ENCODE measurements at regions of chr10 and their contacts with region 1.

Region 1: DNA sequence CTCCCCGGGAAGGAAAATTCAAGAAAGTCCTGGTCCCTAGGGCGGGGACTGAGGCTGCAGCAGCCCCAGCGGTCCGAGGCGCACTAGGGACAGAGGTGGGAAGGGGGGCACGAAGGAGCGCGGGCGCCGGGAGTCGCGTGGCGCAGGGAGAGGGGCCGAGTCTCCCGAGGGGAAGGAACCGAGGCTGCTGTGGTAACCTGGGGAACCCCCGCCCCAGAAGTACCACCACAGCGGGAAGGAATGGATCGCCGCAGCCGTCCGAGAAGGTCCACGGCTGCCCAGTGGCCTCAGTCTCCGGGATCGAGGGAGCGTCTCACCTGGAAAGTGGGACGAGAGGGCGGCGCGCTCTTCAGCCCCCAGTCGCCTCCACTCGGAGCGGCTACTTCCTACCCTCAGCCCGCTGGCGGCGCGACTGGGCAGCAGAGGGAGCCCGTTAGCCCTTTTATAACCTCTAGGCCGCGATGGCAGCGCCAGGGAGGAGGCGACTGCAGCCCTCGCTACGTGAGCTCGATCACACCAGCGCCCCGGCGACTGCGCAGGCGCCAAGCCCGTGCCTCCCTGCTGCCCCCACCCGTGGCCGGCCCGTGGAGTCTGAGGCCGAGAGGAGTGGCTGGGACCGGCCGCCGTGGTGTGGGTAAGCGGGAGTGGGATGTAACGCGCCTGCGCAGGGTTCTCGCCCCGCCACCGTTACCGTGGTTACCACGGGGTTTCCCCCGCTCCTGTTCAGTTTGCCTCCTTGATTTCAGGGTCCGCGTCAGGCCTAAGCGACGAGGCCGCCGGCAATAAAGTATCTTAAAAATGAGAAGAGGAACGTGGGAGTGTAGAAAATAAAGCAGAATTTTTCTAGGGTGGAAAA is at the start of gene P4HA1:
- DNase-seq: peak; percentile 88 to 99 (median 92)
- ATAC-seq: peak; percentile 95
- H3K4me3 ChIP-seq: peak within 1 kb of the TSS; percentile 60
- H3K4me3 Mint-ChIP-seq: peak within 1 kb of the TSS; percentile 91 to 97 (median 96)
- H3K27ac ChIP-seq: peak within 1 kb of the TSS; percentile 97
- H3K27ac Mint-ChIP-seq: peak within 1 kb of the TSS; percentile 76 to 98 (median 92)
- H3K4me1 ChIP-seq: peaks cover 0 to 12% of the 10 kb centered on the region in 2 donors
- H3K4me1 Mint-ChIP-seq: peaks cover 13 to 44% (median 38%) of the 10 kb centered on the region in 7 donors
- H3K27me3 ChIP-seq: no peaks in the 10 kb centered on the region
- H3K27me3 Mint-ChIP-seq: peaks cover 0 to 3% (median 0%) of the 10 kb centered on the region in 5 donors
- total RNA-seq, gene P4HA1: 10.5 to 74.7 (median 14.7) TPM

Region 2: DNA sequence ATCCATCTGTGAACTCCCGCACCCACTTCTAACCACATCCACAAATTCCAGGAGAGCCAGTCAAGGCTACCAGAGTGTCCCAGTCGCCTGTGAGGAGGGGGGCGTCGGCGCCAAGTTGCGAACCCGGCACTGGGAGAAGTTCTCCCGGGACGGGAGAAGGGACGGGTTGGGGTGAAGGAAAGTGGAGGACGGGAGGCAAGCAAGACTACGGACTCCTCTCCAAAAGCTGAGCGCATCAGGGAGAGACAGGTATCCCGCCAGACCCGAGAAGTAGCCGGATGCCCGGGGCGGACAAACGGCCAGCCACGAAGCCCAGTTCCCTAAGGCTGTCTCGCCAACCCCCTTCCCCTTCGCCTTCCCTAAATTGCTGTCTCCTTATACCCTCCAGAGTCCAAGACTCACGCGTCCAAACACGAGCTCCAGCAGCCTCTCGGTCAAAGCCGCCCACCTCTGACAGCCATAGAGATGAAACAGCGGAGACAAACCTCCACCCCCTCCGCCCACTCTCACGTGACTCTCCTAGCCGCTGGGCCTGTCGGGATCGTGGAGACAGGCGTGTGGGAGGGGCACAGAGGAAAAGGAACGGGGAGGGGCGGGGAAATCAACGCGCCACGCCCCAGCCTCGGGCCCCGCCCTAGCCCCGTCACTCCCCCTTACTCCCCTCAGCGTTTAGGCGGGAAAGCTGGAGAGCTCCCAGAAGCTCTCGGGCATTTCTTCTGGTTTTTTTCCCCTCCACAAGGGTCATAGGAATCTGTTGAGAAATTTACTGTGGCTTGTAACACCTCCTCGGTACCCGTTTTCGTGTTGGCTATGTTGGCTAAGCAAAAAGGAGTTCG is 470.9 kb before region 1 on chr10 and contains the start of gene MICU1:
- CTCF ChIA-PET with region 1: no interaction called
- POLR2A ChIA-PET with region 1: no interaction called
- intact Hi-C with region 1: loop called in 1 of 2 experiments (anchors 2 kb)
- DNase-seq: peak; percentile 74 to 93 (median 90)
- ATAC-seq: peak; percentile 100
- H3K4me3 ChIP-seq: peak within 1 kb of the TSS; percentile 97
- H3K4me3 Mint-ChIP-seq: peak within 1 kb of the TSS; percentile 97 to 100 (median 100)
- H3K27ac ChIP-seq: peak within 1 kb of the TSS; percentile 76
- H3K27ac Mint-ChIP-seq: peak within 1 kb of the TSS; percentile 83 to 99 (median 97)
- H3K4me1 ChIP-seq: peaks cover 11 to 16% of the 10 kb centered on the region in 2 donors
- H3K4me1 Mint-ChIP-seq: peaks cover 11 to 28% (median 16%) of the 10 kb centered on the region in 7 donors
- H3K27me3 ChIP-seq: no peaks in the 10 kb centered on the region
- H3K27me3 Mint-ChIP-seq: peaks cover 0 to 8% (median 0%) of the 10 kb centered on the region in 5 donors
- total RNA-seq, gene MICU1: 20.8 to 39.6 (median 26.3) TPM

Region 3: GRCh38 chr10:73110345-73110849 is 13.7 kb after region 1 on chr10 and contains the start of gene NUDT13:
- CTCF ChIA-PET with region 1: interaction called, 10 read pairs
- POLR2A ChIA-PET with region 1: interaction called, 33 read pairs
- intact Hi-C with region 1: loop called (anchors 1 kb)
- DNase-seq: peak in 8 of 9 donors; percentile 30 to 59 (median 47)
- ATAC-seq: peak; percentile 96
- H3K4me3 ChIP-seq: peak within 1 kb of the TSS; percentile 55
- H3K4me3 Mint-ChIP-seq: peak within 1 kb of the TSS; percentile 76 to 96 (median 94)
- H3K27ac ChIP-seq: peak within 1 kb of the TSS; percentile 71
- H3K27ac Mint-ChIP-seq: peak within 1 kb of the TSS; percentile 78 to 95 (median 90)
- H3K4me1 ChIP-seq: no peaks in the 10 kb centered on the region
- H3K4me1 Mint-ChIP-seq: peaks cover 3 to 17% (median 14%) of the 10 kb centered on the region in 7 donors
- H3K27me3 ChIP-seq: no peaks in the 10 kb centered on the region
- H3K27me3 Mint-ChIP-seq: no peaks in the 10 kb centered on the region
- total RNA-seq, gene NUDT13: 1.2 to 3.5 (median 1.5) TPM

Region 4: GRCh38 chr10:73167783-73168464 is 71.2 kb after region 1 on chr10 and contains the starts of genes ECD and FAM149B1:
- CTCF ChIA-PET with region 1: interaction called, 5 read pairs
- POLR2A ChIA-PET with region 1: interaction called, 17 read pairs
- intact Hi-C with region 1: loop called (anchors 1 kb)
- DNase-seq: peak; percentile 86 to 93 (median 92)
- ATAC-seq: peak; percentile 97
- H3K4me3 ChIP-seq: peak within 1 kb of the TSS; percentile 97
- H3K4me3 Mint-ChIP-seq: peak within 1 kb of the TSS; percentile 92 to 100 (median 100)
- H3K27ac ChIP-seq: peak within 1 kb of the TSS; percentile 95
- H3K27ac Mint-ChIP-seq: peak within 1 kb of the TSS; percentile 98 to 100 (median 99)
- H3K4me1 ChIP-seq: peaks cover 29 to 33% of the 10 kb centered on the region in 2 donors
- H3K4me1 Mint-ChIP-seq: peaks cover 30 to 56% (median 43%) of the 10 kb centered on the region in 7 donors
- H3K27me3 ChIP-seq: no peaks in the 10 kb centered on the region
- H3K27me3 Mint-ChIP-seq: no peaks in the 10 kb centered on the region
- total RNA-seq, gene ECD: 30.2 to 42.7 (median 33.1) TPM
- total RNA-seq, gene FAM149B1: 13.7 to 21.0 (median 16.3) TPM

Region 5: DNA sequence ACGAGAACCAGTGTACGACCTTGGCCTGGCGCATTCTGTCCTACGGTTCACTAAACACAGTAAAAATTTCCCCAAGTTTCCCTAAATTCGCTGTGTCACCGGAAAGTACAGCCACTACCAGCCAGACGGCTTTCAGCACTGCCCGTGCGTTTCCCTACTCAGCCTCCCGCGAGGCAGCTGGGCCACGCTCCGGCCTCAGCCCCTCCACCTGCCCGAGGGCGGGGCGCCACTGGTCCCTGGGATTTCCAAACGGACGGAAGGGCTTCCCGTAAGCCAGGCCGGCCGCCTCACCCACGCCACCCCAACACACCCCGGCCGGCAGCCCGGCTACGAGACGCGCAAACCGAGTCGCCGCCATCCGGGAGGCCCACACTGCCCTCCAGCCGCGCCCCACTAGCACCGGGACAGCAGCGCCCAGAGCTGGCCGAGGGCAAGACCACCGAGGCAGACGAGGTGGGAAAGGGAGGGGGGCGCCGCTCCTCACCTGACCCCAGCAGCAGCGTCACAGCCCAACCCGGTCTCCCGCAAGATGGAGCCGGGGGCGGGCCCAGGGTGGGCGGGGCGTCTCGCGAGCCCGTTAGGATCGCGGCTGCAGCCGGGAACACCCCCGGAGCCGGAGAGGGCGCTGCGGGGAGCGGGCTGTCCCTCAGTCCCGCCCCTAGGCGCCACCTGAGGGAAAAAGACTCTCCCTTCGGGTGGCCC is 317.0 kb after region 1 on chr10 and contains the start of gene ANXA7:
- CTCF ChIA-PET with region 1: no interaction called
- POLR2A ChIA-PET with region 1: interaction called, 5 read pairs
- intact Hi-C with region 1: loop called in 1 of 2 experiments (anchors 1 kb)
- DNase-seq: peak; percentile 78 to 93 (median 85)
- ATAC-seq: peak; percentile 99
- H3K4me3 ChIP-seq: peak within 1 kb of the TSS; percentile 78
- H3K4me3 Mint-ChIP-seq: peak within 1 kb of the TSS; percentile 82 to 97 (median 94)
- H3K27ac ChIP-seq: peak within 1 kb of the TSS; percentile 98
- H3K27ac Mint-ChIP-seq: peak within 1 kb of the TSS; percentile 83 to 95 (median 90)
- H3K4me1 ChIP-seq: peaks cover 8 to 16% of the 10 kb centered on the region in 2 donors
- H3K4me1 Mint-ChIP-seq: peaks cover 39 to 60% (median 53%) of the 10 kb centered on the region in 7 donors
- H3K27me3 ChIP-seq: no peaks in the 10 kb centered on the region
- H3K27me3 Mint-ChIP-seq: peaks cover 0 to 4% (median 0%) of the 10 kb centered on the region in 5 donors
- total RNA-seq, gene ANXA7: 74.8 to 118 (median 97.3) TPM